ENCODE measurements at regions of chr2 and their contacts with region 1.

Region 1: DNA sequence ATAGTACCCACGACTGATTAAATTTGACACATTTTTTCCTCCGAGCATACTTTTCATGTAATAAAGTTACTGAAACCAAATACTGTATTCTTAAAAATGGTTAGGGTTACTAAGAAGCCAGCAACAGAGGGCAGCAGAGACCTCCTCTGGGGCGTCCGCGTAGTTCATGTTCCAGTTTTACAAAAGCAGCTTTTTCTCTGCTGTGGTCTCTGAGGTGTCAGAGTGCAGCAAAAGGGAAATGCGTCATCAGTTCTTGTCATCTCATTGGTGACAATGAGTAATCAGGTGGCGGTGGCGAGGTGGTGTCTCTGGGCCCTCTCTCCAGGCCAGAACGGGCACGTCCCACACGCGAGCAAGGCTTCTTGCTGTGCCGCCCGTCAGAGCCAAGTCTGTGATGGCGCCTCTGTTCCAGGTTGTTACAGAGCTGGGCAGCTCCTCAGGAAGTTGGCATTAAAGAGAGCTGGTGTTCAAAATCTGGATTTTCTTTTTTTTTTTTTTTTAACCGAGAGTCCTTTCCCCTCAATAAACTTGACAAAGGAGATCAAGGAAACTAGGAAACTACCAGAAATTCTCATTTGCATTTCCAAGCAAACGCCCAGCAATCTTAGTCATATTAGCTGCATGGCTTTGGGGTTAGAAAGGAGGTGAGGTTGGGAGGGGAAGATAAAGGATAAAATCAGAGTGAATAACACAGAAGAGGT is 98.6 kb upstream of the BZW1 start:
- DNase-seq: peak; percentile 92
- H3K4me3 ChIP-seq: peak overlapping the region in 2 of 3 experiments; percentile 4 to 34
- H3K27ac ChIP-seq: peak overlapping the region; percentile 51
- H3K4me1 ChIP-seq: peaks cover 5% of the 10 kb centered on the region
- H3K27me3 ChIP-seq: no peaks in the 10 kb centered on the region
- CTCF ChIP-seq: peak; percentile 71 to 79
- POLR2A ChIP-seq: peak; percentile 69

Region 2: GRCh38 chr2:199973703-199974102 is 739.5 kb before region 1 on chr2:
- CTCF ChIA-PET with region 1: interaction called, 11 read pairs
- POLR2A ChIA-PET with region 1: no interaction called
- dilution Hi-C with region 1: no loop called
- intact Hi-C with region 1: no loop called
- DNase-seq: peak; percentile 57
- H3K4me3 ChIP-seq: no peak overlapping the region
- H3K27ac ChIP-seq: no peak overlapping the region
- H3K4me1 ChIP-seq: peaks cover 4% of the 10 kb centered on the region
- H3K27me3 ChIP-seq: no peaks in the 10 kb centered on the region
- CTCF ChIP-seq: peak; percentile 13 to 46
- POLR2A ChIP-seq: no peak

Region 3: GRCh38 chr2:200747668-200748618 is 34.8 kb after region 1 on chr2:
- CTCF ChIA-PET with region 1: interaction called, 10 read pairs
- POLR2A ChIA-PET with region 1: no interaction called
- dilution Hi-C with region 1: no loop called
- intact Hi-C with region 1: no loop called
- DNase-seq: no peak
- H3K4me3 ChIP-seq: no peak overlapping the region
- H3K27ac ChIP-seq: no peak overlapping the region
- H3K4me1 ChIP-seq: peaks cover 8% of the 10 kb centered on the region
- H3K27me3 ChIP-seq: no peaks in the 10 kb centered on the region
- CTCF ChIP-seq: no peak
- POLR2A ChIP-seq: no peak

Region 4: DNA sequence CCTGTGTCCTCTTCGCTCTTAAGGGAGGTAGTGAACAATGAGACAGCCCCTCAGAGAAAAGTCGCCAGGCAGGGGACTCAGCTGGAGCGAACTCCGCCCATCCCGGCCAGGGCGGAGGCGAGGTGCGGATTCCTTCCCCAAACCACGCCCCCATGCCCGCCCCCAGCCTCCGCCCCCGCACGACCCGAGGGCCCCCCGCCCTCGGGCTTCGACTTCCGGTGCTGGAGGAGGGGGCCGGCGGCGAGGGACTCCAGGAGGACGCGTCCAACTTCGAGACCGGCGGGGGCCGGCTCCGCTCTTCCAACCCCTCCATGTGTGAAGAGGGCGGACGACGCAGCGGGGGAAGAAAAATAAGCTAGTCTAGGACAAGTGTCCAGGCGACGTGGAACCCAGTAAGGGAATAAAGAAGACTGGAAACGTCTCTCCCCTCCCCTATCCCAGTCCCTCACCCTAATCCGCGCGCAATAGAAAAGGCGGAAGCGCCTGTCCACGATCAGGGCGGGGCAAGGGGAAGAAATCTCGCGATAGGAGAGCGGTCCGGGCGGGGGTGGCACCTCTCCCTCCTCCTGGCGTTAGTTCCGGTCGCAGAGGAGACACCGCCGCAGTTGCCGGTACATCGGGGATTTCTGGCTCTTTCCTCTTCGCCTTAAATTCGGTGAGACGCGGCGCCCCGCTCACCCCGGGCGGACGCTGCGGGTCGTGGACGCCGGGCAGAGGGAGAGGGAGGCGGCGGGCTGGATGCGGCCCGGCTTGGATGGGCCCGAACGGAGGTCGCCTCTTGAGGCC is 98.4 kb after region 1 on chr2 and contains the start of gene BZW1:
- CTCF ChIA-PET with region 1: interaction called, 18 read pairs
- POLR2A ChIA-PET with region 1: interaction called, 8 read pairs
- dilution Hi-C with region 1: no loop called
- intact Hi-C with region 1: loop called (anchors 1 kb)
- DNase-seq: peak; percentile 95
- H3K4me3 ChIP-seq: peak within 1 kb of the TSS; percentile 76 to 99 (median 96)
- H3K27ac ChIP-seq: peak within 1 kb of the TSS; percentile 98
- H3K4me1 ChIP-seq: peaks cover 34% of the 10 kb centered on the region
- H3K27me3 ChIP-seq: no peaks in the 10 kb centered on the region
- CTCF ChIP-seq: no peak
- POLR2A ChIP-seq: peak; percentile 69
- total RNA-seq, gene BZW1: 347 and 353 TPM in 2 replicates

Region 5: DNA sequence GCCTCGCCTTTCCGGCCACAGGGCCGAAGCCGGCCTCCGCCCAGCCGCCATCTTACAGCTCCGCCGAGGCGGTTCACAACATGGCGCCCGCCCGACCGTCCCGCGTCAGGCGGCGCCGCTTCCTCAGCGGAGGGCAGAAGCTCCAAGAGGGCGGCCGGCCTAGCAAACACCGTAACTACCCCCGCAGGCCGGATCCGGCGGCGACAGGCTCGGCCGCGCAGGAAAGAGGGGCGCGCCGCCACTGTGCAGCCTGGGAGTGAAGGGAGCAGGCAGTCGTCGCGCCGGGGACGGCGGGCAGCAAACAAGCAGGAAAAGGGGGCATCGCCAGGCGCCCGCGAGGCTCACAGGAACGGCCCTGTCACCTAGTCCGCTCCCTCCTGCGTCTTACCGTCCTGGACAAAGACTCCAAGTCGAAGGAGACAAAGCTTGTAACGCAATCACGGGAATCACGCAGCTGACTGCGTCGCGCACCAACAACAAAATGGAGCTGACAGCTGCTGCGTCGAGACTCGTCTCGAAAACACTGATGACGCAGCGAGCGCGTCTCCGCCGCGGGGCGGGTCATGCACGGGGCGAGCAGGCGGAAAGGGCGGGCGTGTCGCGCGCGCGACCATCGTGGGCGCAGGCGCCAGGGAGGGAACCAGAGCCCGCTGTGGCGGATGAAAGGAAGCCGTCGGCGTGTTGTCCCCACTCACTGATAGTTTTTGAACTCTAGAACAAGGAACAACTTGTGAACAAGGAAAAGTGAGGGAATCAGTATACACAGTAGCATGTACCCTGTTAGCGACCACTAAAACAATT is 151.2 kb after region 1 on chr2 and contains the start of gene CLK1:
- CTCF ChIA-PET with region 1: interaction called, 6 read pairs
- POLR2A ChIA-PET with region 1: interaction called, 4 read pairs
- dilution Hi-C with region 1: no loop called
- intact Hi-C with region 1: loop called (anchors 1 kb)
- DNase-seq: peak; percentile 95
- H3K4me3 ChIP-seq: peak within 1 kb of the TSS; percentile 90 to 99 (median 91)
- H3K27ac ChIP-seq: peak within 1 kb of the TSS; percentile 88
- H3K4me1 ChIP-seq: peaks cover 26% of the 10 kb centered on the region
- H3K27me3 ChIP-seq: no peaks in the 10 kb centered on the region
- CTCF ChIP-seq: no peak
- POLR2A ChIP-seq: peak; percentile 97
- total RNA-seq, gene CLK1: 79.7 and 92.4 TPM in 2 replicates

Region 6: DNA sequence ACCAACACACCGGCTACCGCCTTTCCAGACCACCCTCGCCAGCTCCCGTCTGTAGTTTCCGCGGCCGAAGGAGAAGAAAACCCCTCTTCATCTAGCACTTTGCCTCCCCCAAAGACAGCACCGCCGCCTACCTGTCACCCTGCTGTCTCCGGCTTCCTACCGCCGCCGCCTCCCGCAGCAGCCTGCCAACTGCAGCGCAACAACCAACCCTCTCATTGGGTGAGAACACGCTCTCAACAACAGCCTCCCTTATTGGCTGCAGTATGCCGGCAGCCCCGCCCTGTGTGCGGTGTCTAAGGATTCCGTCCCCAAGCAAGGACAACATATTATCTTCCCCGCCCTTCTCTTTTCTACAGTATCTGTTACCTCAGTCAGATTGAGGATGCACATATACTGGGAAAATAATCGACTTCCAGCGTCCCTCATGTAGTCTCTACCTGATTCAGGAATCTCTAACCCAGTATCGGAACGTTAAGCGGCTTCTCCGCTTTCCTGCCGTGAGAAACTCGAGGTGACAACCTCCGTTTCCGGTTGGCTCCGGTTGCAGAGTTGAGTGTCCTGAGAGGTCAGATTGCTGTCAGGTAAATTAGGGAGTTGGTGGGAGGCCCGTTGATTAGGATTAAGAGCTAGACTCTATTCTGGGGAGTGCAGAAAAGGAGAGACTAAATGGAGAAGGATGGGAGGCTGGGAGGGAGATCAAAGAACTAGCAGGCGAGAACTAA is 358.5 kb after region 1 on chr2 and contains the starts of genes HYCC2 and NDUFB3:
- CTCF ChIA-PET with region 1: interaction called, 5 read pairs
- POLR2A ChIA-PET with region 1: no interaction called
- dilution Hi-C with region 1: no loop called
- intact Hi-C with region 1: loop called (anchors 5 kb)
- DNase-seq: peak; percentile 96
- H3K4me3 ChIP-seq: peak within 1 kb of the TSS; percentile 94 to 99 (median 94)
- H3K27ac ChIP-seq: peak within 1 kb of the TSS; percentile 94
- H3K4me1 ChIP-seq: peaks cover 34% of the 10 kb centered on the region
- H3K27me3 ChIP-seq: no peaks in the 10 kb centered on the region
- CTCF ChIP-seq: no peak
- POLR2A ChIP-seq: peak; percentile 38
- total RNA-seq, gene HYCC2: 20.3 and 21.2 TPM in 2 replicates
- total RNA-seq, gene NDUFB3: 96.7 and 101 TPM in 2 replicates

Measured in endothelial cell of umbilical vein (primary cell).